ENCODE measurements at regions of chr4 and their contacts with region 1.

Region 1: DNA sequence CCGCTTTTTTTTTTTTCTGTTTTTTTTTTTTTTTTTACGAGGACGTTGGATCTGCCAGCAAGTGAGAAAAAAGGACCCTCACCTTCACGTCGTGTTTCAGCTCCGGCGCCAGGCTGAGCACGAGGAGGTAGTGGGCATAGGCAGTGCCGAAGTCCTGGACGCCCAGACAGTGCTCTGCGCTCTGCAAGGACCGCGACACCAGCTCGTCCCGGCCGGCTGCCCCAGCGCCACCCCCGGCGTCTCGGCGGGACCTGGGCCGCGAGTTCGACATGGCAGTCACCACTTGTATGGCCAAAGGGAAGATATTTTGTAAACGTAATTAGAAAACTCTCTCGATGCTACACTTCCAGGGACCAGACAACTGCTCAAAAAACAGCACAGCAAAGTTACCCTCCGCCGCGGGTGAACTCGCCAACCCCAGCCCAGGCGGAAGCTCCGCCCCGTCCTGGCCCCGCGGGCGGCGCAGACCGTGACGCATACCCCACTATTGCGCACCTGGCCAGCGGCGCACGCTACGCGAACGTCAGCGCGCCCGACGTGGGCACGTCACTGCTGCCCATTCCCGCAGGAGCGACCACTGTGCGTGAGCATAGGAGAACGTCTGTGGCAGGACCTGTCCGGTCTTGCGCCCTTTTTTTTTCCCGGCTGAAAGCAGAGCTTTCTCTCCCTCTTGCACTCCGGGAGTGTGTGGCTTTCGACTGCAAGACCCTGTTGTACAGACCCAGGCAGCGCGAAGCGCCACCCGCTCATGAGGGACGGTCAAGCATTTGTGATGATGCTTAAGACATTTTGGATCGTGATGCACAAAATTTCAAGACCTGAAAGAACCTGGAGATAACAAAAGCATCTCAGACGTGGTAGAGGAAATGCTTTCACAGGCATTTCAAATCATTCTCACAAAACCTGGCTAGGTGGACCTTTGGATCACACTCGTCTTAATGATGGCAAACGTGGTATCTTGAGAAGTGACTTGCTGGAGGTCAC is at the start of gene PRMT9:
- DNase-seq: peak; percentile 96
- total RNA-seq, gene PRMT9: 6.8 TPM

Region 2: GRCh38 chr4:147617173-147617840 is 66.7 kb before region 1 on chr4 and contains the start of gene TMEM184C:
- intact Hi-C with region 1: loop called (anchors 5 kb)
- DNase-seq: peak; percentile 99
- total RNA-seq, gene TMEM184C: 19.0 TPM

Region 3: DNA sequence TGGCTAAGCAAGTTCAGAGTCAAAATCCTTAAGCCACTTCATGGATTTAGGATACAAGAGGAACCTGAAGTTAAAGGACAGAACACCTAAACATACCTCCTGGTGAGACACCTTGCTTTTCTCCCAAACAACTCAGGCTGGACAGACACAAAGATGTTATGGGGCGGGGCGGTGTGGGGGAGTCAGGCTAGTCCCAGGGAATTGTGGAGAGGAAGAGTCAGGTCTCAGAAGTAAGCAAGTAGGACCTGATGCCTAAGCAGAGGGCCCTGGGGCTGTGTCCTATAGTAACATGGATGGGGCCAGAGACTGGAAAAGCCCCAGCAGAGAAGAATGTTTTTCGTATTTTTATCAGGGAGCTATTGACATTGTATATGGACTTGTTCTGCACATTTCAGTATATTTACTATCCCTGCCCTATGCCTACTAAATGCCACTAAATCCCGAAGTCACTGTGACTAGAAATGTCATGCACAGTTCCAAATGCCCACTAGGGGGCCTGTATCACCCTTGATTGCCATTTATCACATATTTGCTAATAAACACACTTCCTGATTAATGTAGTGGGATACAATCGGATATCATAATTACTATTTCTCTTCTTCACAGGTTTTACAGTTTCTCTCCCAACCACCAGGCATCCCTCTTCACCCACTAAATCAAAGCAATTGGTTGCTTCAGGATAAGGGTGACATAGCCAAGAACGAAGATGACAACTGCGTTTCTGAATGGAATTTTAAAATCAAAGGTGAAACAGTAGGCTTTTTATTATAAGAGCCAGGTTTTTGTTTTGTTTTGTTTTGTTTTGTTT is 24.1 kb after region 1 on chr4:
- intact Hi-C with region 1: no loop called
- DNase-seq: no peak

Measured in cardiac septum (tissue), 1 donor.